ENCODE measurements at regions of chr16 and their contacts with region 1.

Region 1: GRCh38 chr16:8868416-8869211 is at the start of gene CARHSP1:
- DNase-seq: peak; percentile 97
- H3K4me3 ChIP-seq: peak within 1 kb of the TSS; percentile 90
- H3K27ac ChIP-seq: peak within 1 kb of the TSS; percentile 96
- H3K4me1 ChIP-seq: peaks cover 49% of the 10 kb centered on the region
- H3K27me3 ChIP-seq: no peaks in the 10 kb centered on the region
- CTCF ChIP-seq: no peak
- total RNA-seq, gene CARHSP1: 316 and 329 TPM in 2 replicates

Region 2: GRCh38 chr16:8797364-8798173 is 71.0 kb before region 1 on chr16 and contains the starts of genes PMM2 and TMEM186:
- CTCF ChIA-PET with region 1: no interaction called
- POLR2A ChIA-PET with region 1: interaction called, 3 read pairs
- intact Hi-C with region 1: loop called (anchors 5 kb)
- DNase-seq: peak; percentile 98
- H3K4me3 ChIP-seq: peak within 1 kb of the TSS; percentile 79
- H3K27ac ChIP-seq: peak within 1 kb of the TSS; percentile 75
- H3K4me1 ChIP-seq: peaks cover 12% of the 10 kb centered on the region
- H3K27me3 ChIP-seq: no peaks in the 10 kb centered on the region
- CTCF ChIP-seq: no peak
- total RNA-seq, gene PMM2: 44.3 and 54.8 TPM in 2 replicates
- total RNA-seq, gene TMEM186: 13.3 and 13.5 TPM in 2 replicates